Activated naive CD4-positive, alpha-beta T cell treated with anti-CD3 and anti-CD28 coated beads for 36 hours (primary cell): ENCODE measurements at regions of chr13 and their contacts with region 1.

Region 1: GRCh38 chr13:19959831-19960652 is 1.5 kb downstream of the ZMYM2 start:
- DNase-seq: peak; percentile 92
- H3K4me3 Mint-ChIP-seq: peak overlapping the region; percentile 95
- H3K27ac Mint-ChIP-seq: peak overlapping the region; percentile 96
- H3K4me1 Mint-ChIP-seq: peaks cover 30% of the 10 kb centered on the region
- H3K27me3 Mint-ChIP-seq: no peaks in the 10 kb centered on the region

Region 2: GRCh38 chr13:19587635-19588300 is 372.3 kb before region 1 on chr13:
- CTCF ChIA-PET with region 1: no interaction called
- intact Hi-C with region 1: loop called (anchors 10 kb)
- DNase-seq: peak; percentile 58
- H3K4me3 Mint-ChIP-seq: peak overlapping the region; percentile 75
- H3K27ac Mint-ChIP-seq: peak overlapping the region; percentile 93
- H3K4me1 Mint-ChIP-seq: peaks cover 17% of the 10 kb centered on the region
- H3K27me3 Mint-ChIP-seq: no peaks in the 10 kb centered on the region

Region 3: DNA sequence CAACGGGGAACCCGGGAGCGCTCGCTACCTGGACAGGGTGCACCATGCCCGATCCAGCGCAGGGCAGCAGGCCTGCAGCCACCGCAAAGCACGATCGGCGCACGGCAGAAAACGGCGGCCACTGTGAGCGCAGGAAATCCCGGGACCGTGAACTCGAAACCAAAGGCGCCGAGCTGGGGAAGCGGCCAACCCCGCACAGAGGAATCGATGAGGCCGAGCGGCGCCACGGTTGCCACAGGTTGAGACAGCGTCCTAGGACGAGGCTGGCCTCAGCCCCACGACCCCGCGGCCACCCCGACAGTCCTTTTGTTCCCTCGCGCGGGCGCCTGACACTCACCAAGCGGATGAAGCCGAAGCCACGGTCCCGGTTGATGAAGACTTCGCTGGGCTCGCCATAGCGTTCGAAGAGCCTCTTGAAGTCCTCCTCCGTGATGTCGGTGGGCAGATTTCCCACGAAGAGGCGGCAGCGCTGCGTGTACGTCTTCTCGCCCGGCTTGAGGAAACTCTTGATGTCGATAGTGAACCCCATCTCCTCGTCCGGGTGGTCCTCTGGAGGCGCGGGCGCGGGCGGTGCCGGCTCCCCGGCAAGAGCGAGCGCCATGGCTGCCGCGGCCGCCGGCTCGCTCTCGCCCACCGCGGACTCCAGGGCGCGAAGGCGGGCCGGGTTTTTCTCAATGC is 177.9 kb before region 1 on chr13:
- CTCF ChIA-PET with region 1: interaction called, 4 read pairs
- intact Hi-C with region 1: loop called (anchors 1 kb)
- DNase-seq: peak; percentile 74
- H3K4me3 Mint-ChIP-seq: peak overlapping the region; percentile 96
- H3K27ac Mint-ChIP-seq: peak overlapping the region; percentile 98
- H3K4me1 Mint-ChIP-seq: peaks cover 7% of the 10 kb centered on the region
- H3K27me3 Mint-ChIP-seq: peaks cover 3% of the 10 kb centered on the region

Region 4: DNA sequence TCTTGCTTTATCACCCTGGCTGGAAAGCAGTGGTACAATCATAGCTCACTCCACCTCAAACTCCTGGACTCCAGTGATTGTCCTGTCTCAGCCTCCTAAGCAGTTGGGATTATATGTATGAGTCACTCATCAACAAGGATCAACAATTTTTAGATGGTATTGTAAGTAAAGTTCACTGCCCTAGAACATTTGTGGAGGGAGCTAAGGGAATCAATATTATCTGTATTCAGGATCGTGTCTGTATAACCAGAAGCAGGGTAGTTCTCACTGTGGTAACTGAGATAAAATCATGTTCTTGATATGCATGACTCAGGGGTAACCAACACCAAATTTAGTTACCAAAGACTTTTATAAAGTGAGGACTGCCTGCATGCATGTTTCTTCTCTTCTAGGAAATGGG is 123.6 kb before region 1 on chr13:
- CTCF ChIA-PET with region 1: no interaction called
- intact Hi-C with region 1: no loop called
- DNase-seq: no peak
- H3K4me3 Mint-ChIP-seq: no peak overlapping the region
- H3K27ac Mint-ChIP-seq: no peak overlapping the region
- H3K4me1 Mint-ChIP-seq: no peaks in the 10 kb centered on the region
- H3K27me3 Mint-ChIP-seq: no peaks in the 10 kb centered on the region

Region 5: DNA sequence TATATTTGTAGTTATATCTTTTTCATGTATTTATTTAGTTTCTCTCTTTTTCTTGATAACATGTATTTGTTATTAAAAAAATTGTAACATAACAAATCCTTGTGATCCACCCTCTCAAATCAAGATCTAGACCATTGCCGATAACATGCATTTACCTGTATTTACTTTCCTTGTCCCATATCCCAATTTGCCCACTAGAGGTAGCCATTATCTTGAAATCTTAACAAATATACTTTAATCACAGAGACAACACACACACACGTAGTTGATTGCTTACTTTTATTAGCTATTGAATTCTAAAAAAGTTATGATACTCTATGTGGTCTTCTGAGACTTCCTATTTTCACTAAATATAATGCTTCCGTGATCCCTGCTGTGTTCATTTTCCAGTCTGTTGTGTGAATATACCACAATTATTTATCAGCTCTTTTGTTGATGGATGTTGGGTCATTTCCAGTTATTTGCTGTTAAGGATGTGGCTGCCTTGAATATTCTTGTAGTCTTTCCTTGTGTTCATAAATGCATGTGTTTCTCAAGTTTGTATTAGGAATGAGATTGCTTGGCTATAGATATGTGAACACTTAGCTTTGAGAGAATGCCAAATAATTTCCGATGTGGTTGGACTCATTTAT is 32.8 kb before region 1 on chr13:
- CTCF ChIA-PET with region 1: interaction called, 4 read pairs
- intact Hi-C with region 1: loop called (anchors 2 kb)
- DNase-seq: no peak
- H3K4me3 Mint-ChIP-seq: no peak overlapping the region
- H3K27ac Mint-ChIP-seq: no peak overlapping the region
- H3K4me1 Mint-ChIP-seq: no peaks in the 10 kb centered on the region
- H3K27me3 Mint-ChIP-seq: no peaks in the 10 kb centered on the region

Region 6: DNA sequence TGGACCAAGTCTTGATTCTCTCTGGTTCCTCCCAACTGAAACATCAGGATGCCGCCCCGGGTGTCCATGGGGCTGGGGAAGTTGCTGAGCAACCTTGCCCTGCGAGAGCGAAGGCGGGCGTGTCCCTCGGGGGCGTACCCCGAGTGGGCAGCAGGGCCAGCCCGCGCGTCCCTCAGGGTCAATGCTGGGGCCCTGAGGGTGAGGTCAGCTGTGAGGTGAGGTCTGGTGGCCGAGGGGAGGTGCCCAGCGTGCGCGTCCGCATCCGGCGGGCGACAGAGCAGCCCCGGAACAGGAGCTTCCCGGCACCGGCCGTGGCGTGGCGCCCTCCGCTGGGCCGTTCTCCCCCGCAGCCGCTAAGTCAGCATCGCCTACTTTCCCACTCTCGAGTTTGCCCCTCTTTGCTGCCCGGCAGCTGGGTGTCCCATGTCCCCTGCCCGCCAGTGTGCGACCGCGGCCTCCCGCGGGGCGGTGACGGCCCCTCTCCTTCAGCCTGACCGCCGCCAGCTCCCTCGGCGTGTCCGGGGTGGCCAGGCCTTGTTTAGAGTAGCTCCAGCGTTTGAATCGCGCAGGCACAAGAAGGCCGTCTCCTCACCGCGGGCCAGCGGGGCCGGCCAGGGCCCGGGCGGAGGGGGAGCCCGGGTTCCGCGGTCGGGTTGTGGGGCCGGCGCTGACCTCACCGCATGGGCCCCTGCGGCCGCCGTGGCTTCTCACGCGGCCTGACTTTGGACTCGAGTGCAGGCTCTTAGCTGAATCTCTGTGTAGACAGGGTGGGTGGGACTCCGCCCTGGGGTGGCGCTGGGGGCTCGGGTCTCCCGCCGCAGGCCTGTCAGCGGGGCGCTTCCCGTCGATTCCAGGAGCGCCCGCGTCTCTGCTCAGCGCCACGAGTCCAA is 167.8 kb after region 1 on chr13:
- CTCF ChIA-PET with region 1: no interaction called
- intact Hi-C with region 1: loop called (anchors 2 kb)
- DNase-seq: peak; percentile 47
- H3K4me3 Mint-ChIP-seq: peak overlapping the region; percentile 60
- H3K27ac Mint-ChIP-seq: no peak overlapping the region
- H3K4me1 Mint-ChIP-seq: no peaks in the 10 kb centered on the region
- H3K27me3 Mint-ChIP-seq: peaks cover 23% of the 10 kb centered on the region

Region 7: DNA sequence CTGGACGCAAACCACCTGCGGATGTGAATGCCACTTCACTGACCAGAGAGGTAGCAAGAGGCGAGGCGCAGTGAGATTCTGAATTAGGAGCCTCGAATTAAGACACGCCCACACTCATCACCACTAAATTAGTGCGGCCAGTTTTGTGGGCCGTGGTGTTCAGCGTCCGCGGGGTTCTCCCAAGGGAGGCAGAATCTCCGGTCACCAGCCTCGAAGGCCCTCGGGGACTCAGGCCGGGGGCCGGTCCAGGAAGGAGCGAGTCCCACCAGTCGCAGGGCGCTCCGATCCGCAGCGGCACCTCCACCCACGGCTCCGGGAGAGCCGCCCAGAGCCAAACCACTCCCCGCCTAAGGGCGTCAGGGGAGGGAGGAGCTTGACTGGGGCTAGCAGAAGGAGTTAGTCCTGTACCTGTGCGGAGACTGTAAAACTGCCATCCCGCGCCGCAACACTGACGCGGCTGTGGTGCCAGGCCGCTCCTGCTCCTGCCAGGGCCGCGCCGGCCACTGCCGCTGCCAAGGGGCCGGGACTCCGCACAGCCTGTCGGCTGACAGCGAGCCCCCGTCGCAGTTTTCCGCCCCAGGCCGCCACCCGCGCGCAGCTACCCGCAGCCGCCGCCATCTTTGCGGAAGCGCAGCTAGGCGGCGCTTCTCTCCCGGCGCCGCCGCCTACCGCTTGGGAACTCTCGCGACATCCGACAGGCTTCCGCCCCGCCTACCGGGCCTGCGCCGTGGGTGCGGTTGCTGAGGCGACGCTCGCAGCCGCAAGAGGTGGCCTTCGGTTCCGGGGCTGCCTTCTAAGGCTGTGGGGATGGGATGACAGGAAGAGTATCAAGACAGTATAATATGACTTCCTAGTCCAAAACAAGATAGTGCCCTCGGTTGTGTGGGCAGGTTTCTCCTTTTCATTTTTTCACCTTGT is 1643.7 kb after region 1 on chr13 and contains the start of gene MICU2:
- CTCF ChIA-PET with region 1: no interaction called
- intact Hi-C with region 1: loop called (anchors 5 kb)
- DNase-seq: peak; percentile 97
- H3K4me3 Mint-ChIP-seq: peak within 1 kb of the TSS; percentile 84
- H3K27ac Mint-ChIP-seq: peak within 1 kb of the TSS; percentile 90
- H3K4me1 Mint-ChIP-seq: peaks cover 28% of the 10 kb centered on the region
- H3K27me3 Mint-ChIP-seq: peaks cover 3% of the 10 kb centered on the region
- total RNA-seq, gene MICU2: 27.5 to 28.2 TPM